HEK293 (cell line): ENCODE measurements at regions of chr18 and their contacts with region 1.

Region 1: GRCh38 chr18:8478166-8478967 is 130.9 kb upstream of the RAB12 start:
- H3K4me3 ChIP-seq: no peak overlapping the region
- H3K27ac ChIP-seq: no peak overlapping the region
- H3K4me1 ChIP-seq: no peaks in the 10 kb centered on the region
- CTCF ChIP-seq: peak; percentile 65

Region 2: DNA sequence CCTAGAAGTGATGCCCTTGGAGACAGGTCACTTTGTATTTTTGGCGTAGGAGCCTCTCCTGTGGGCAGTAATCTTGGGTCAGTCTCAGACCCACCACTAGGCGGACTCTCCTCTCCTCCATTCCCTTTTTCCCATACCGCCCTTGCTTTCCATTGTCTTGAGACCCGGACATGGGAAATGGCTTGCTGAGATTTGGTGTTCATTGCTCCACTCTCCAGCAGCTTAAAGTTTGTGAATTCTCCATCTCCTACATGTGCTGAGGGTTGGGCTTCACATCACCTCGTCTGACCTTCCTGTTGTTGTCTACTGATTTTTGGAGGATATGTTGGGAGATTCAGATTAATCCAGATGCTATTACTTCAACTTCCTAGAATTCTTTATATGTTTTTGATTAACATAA is 28.4 kb before region 1 on chr18:
- CTCF ChIA-PET with region 1: interaction called, 12 read pairs
- POLR2A ChIA-PET with region 1: no interaction called
- H3K4me3 ChIP-seq: no peak overlapping the region
- H3K27ac ChIP-seq: no peak overlapping the region
- H3K4me1 ChIP-seq: no peaks in the 10 kb centered on the region
- CTCF ChIP-seq: peak; percentile 34; the same call in 1 of the 2 replicates

Region 3: GRCh38 chr18:8461544-8461943 is 16.8 kb before region 1 on chr18:
- CTCF ChIA-PET with region 1: interaction called, 21 read pairs
- POLR2A ChIA-PET with region 1: no interaction called
- H3K4me3 ChIP-seq: no peak overlapping the region
- H3K27ac ChIP-seq: no peak overlapping the region
- H3K4me1 ChIP-seq: no peaks in the 10 kb centered on the region
- CTCF ChIP-seq: no peak

Region 4: GRCh38 chr18:8595445-8595844 is 117.1 kb after region 1 on chr18:
- CTCF ChIA-PET with region 1: no interaction called
- POLR2A ChIA-PET with region 1: no interaction called
- H3K4me3 ChIP-seq: no peak overlapping the region
- H3K27ac ChIP-seq: no peak overlapping the region
- H3K4me1 ChIP-seq: no peaks in the 10 kb centered on the region
- CTCF ChIP-seq: no peak